Naive thymus-derived CD4-positive, alpha-beta T cell (primary cell): ENCODE measurements at regions of chr9 and their contacts with region 1.

Region 1: GRCh38 chr9:136944519-136945279 is at the starts of genes C8G and FBXW5:
- DNase-seq: peak; percentile 88 to 99 (median 96)
- ATAC-seq: peak; percentile 92
- H3K4me3 ChIP-seq: peak within 1 kb of the TSS; percentile 72
- H3K4me3 Mint-ChIP-seq: peak within 1 kb of the TSS; percentile 71 to 85 (median 81)
- H3K27ac ChIP-seq: peak within 1 kb of the TSS; percentile 77
- H3K27ac Mint-ChIP-seq: peak within 1 kb of the TSS in 8 of 9 donors; percentile 63 to 90 (median 79)
- H3K4me1 ChIP-seq: peaks cover 10 to 11% of the 10 kb centered on the region in 2 donors
- H3K4me1 Mint-ChIP-seq: peaks cover 0 to 14% (median 5%) of the 10 kb centered on the region in 7 donors
- H3K27me3 ChIP-seq: no peaks in the 10 kb centered on the region
- H3K27me3 Mint-ChIP-seq: no peaks in the 10 kb centered on the region
- total RNA-seq, gene C8G: 0.77 to 3.6 (median 1.4) TPM
- total RNA-seq, gene FBXW5: 54.3 to 105 (median 94.5) TPM

Region 2: DNA sequence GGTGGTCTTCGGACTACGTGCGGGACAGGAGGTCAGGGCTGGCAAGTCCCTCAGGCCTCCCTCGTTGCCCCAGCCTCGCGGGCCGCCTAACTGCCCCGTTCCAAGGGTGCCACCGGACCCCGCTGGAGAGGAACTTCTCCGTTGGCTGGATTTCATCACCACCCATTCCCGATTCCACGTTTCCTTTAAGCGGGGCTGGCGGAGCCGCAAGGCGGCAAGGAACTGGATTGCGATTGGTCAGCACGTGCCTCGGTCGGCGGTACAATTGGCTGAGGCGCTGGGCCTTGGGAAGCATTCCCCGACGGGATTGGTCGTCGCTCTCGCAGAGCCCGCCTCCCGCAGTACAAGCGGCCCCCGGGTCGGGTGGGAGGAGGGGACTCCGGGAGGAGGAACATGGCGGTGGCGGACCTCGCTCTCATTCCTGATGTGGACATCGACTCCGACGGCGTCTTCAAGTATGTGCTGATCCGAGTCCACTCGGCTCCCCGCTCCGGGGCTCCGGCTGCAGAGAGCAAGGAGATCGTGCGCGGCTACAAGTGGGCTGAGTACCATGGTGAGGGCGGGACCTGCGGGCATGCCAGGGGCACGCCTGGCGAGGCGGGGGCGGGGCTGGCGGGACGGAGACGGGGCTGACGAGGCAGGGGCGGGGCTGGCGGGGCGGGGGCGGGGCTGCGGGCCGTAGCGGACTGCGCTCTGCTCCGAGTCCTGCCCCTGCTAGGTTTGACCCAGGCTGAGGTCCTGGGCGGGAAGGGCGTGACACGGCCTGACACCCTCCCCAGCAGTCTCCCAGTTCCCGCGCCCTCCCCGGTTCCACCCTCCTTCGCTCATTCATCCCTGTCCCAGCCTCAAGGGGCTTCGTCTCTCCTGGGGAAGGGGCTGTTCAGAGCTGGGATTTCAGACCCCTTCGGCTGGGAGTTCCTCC is 95.4 kb before region 1 on chr9 and contains the start of gene PHPT1:
- CTCF ChIA-PET with region 1: no interaction called
- POLR2A ChIA-PET with region 1: interaction called, 3 read pairs
- intact Hi-C with region 1: loop called (anchors 1 kb)
- DNase-seq: peak; percentile 91 to 98 (median 97)
- ATAC-seq: peak; percentile 96
- H3K4me3 ChIP-seq: peak within 1 kb of the TSS; percentile 99
- H3K4me3 Mint-ChIP-seq: peak within 1 kb of the TSS; percentile 86 to 97 (median 92)
- H3K27ac ChIP-seq: peak within 1 kb of the TSS; percentile 71
- H3K27ac Mint-ChIP-seq: peak within 1 kb of the TSS; percentile 40 to 94 (median 88)
- H3K4me1 ChIP-seq: peaks cover 15 to 17% of the 10 kb centered on the region in 2 donors
- H3K4me1 Mint-ChIP-seq: peaks cover 0 to 16% (median 10%) of the 10 kb centered on the region in 7 donors
- H3K27me3 ChIP-seq: no peaks in the 10 kb centered on the region
- H3K27me3 Mint-ChIP-seq: peaks cover 0 to 21% (median 0%) of the 10 kb centered on the region in 5 donors
- total RNA-seq, gene PHPT1: 17.7 to 167 (median 27.7) TPM

Region 3: GRCh38 chr9:136885950-136886578 is 58.6 kb before region 1 on chr9 and contains the start of gene TRAF2:
- CTCF ChIA-PET with region 1: no interaction called
- POLR2A ChIA-PET with region 1: interaction called, 8 read pairs
- intact Hi-C with region 1: loop called (anchors 1 kb)
- DNase-seq: peak; percentile 93 to 98 (median 96)
- ATAC-seq: peak; percentile 95
- H3K4me3 ChIP-seq: peak within 1 kb of the TSS; percentile 76
- H3K4me3 Mint-ChIP-seq: peak within 1 kb of the TSS; percentile 83 to 99 (median 86)
- H3K27ac ChIP-seq: peak within 1 kb of the TSS; percentile 97
- H3K27ac Mint-ChIP-seq: peak within 1 kb of the TSS; percentile 78 to 95 (median 89)
- H3K4me1 ChIP-seq: peaks cover 26 to 29% of the 10 kb centered on the region in 2 donors
- H3K4me1 Mint-ChIP-seq: peaks cover 17 to 53% (median 37%) of the 10 kb centered on the region in 7 donors
- H3K27me3 ChIP-seq: no peaks in the 10 kb centered on the region
- H3K27me3 Mint-ChIP-seq: no peaks in the 10 kb centered on the region
- total RNA-seq, gene TRAF2: 14.6 to 72.8 (median 29.6) TPM

Region 4: GRCh38 chr9:137034863-137035761 is 90.4 kb after region 1 on chr9:
- CTCF ChIA-PET with region 1: interaction called, 3 read pairs
- POLR2A ChIA-PET with region 1: interaction called, 3 read pairs
- intact Hi-C with region 1: loop called (anchors 2 kb)
- DNase-seq: peak; percentile 74 to 88 (median 82)
- ATAC-seq: peak; percentile 84
- H3K4me3 ChIP-seq: peak overlapping the region; percentile 34
- H3K4me3 Mint-ChIP-seq: peak overlapping the region; percentile 55 to 81 (median 66)
- H3K27ac ChIP-seq: no peak overlapping the region
- H3K27ac Mint-ChIP-seq: peak overlapping the region in 4 of 9 donors; percentile 19 to 85 (median 43)
- H3K4me1 ChIP-seq: peaks cover 36 to 41% of the 10 kb centered on the region in 2 donors
- H3K4me1 Mint-ChIP-seq: peaks cover 11 to 36% (median 24%) of the 10 kb centered on the region in 7 donors
- H3K27me3 ChIP-seq: no peaks in the 10 kb centered on the region
- H3K27me3 Mint-ChIP-seq: peaks cover 0 to 3% (median 0%) of the 10 kb centered on the region in 5 donors

Region 5: DNA sequence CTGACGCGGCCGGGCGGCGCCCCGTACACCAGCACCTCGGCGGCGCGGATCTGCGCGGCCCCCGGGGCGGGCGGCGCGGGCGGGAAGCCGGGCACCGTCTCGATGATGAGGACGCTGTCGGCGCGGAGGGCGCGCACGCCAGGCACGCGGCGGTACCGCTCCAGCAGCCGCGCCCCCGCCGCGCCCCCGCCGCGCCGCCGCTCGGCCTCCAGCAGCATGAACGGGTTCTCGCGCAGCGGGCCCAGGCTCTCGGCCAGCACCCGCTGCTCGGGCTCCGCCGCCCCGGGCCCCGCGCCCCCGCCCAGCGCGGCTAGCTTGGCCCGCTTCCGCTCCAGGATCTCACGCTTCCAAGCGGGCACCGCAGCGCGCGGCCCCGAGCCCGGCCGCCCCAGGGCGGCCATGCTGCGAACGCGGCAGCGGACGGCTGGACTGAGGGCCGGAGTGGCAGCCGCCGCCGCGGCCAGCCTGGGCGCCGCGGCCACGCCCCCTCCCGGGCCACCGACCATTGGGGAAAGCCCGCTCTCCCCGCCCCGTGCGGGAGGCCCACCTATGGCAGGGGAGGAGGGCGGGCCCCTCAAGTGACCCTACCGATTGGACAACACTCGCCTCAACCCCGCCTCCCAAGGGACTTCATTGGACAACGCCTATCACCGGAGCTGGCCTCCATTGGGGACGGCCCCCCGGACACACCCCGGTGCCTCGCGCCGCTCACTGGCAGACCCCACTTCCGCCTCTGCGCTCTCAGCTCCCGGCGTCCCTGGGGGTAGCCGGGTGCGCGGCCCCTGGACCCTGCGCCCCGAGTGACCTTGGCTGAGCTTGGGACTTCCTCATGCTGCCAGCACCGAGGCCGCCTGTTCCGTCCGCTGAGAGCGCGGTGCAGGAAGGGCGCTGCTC is 255.9 kb after region 1 on chr9 and contains the start of gene TPRN:
- CTCF ChIA-PET with region 1: no interaction called
- POLR2A ChIA-PET with region 1: no interaction called
- intact Hi-C with region 1: loop called in 1 of 2 experiments (anchors 10 kb)
- DNase-seq: peak; percentile 89 to 98 (median 97)
- ATAC-seq: peak; percentile 98
- H3K4me3 ChIP-seq: peak within 1 kb of the TSS; percentile 75
- H3K4me3 Mint-ChIP-seq: peak within 1 kb of the TSS; percentile 77 to 89 (median 84)
- H3K27ac ChIP-seq: peak within 1 kb of the TSS; percentile 78
- H3K27ac Mint-ChIP-seq: peak within 1 kb of the TSS; percentile 12 to 91 (median 78)
- H3K4me1 ChIP-seq: peaks cover 20 to 23% of the 10 kb centered on the region in 2 donors
- H3K4me1 Mint-ChIP-seq: peaks cover 16 to 34% (median 23%) of the 10 kb centered on the region in 7 donors
- H3K27me3 ChIP-seq: no peaks in the 10 kb centered on the region
- H3K27me3 Mint-ChIP-seq: no peaks in the 10 kb centered on the region
- total RNA-seq, gene TPRN: 7.1 to 13.5 (median 8.5) TPM